Activated T-helper 2 cell treated with anti-CD3 and anti-CD28 coated beads, Interferon-gamma antibody, Interleukin-2, Interleukin-4, amounts not matched to agents 10 μg/mL and 5 μg/mL and 100 μg/mL, durations not matched to agents 14 hours and 24 hours and 36 hours (primary cell): ENCODE measurements at regions of chr7 and their contacts with region 1.

Region 1: DNA sequence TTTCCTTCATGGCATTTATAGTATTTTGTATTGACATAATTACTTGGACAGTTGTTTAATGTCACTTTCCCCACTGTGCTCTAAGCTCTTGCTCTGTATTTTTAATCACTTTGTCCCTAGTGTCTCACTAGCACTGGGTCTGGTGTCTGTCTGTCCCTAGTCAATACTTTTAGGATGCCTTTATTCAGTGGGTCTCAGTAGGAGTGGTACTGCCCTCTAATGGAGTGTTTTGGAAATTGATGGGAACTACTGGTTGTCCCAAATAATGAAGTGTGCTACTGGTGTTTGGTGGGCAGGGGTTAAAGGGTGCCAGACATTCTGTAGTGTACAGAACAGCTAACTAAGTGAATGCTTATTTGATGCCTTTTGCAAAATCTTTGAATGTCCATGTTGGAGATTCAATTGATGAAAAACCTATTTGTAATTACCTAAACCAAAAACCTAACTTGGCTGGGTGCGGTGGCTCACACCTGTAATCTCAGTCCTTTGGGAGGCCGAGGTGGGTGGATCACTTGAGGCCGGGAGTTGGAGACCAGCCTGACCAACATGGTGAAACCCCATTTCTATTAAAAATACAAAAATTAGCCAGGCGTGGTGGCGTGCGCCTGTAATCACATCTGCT is 33.3 kb downstream of the CDK14 start:
- DNase-seq: no peak
- H3K4me3 Mint-ChIP-seq: no peak overlapping the region
- H3K27ac Mint-ChIP-seq: no peak overlapping the region
- H3K4me1 Mint-ChIP-seq: no peaks in the 10 kb centered on the region
- H3K27me3 Mint-ChIP-seq: no peaks in the 10 kb centered on the region

Region 2: GRCh38 chr7:90552521-90552920 is 76.9 kb before region 1 on chr7:
- intact Hi-C with region 1: loop called (anchors 5 kb)
- DNase-seq: no peak
- H3K4me3 Mint-ChIP-seq: no peak overlapping the region
- H3K27ac Mint-ChIP-seq: no peak overlapping the region
- H3K4me1 Mint-ChIP-seq: no peaks in the 10 kb centered on the region
- H3K27me3 Mint-ChIP-seq: no peaks in the 10 kb centered on the region

Region 3: GRCh38 chr7:92313055-92313454 is 1683.6 kb after region 1 on chr7:
- intact Hi-C with region 1: no loop called
- DNase-seq: no peak
- H3K4me3 Mint-ChIP-seq: no peak overlapping the region
- H3K27ac Mint-ChIP-seq: no peak overlapping the region
- H3K4me1 Mint-ChIP-seq: no peaks in the 10 kb centered on the region
- H3K27me3 Mint-ChIP-seq: no peaks in the 10 kb centered on the region